Esophagus muscularis mucosa (tissue), 4 donors: ENCODE measurements at regions of chr11 and their contacts with region 1.

Region 1: GRCh38 chr11:17207317-17208258 is at the start of gene PIK3C2A:
- DNase-seq: peak; percentile 99
- H3K4me3 ChIP-seq: peak within 1 kb of the TSS; percentile 70 to 98 (median 90)
- H3K27ac ChIP-seq: peak within 1 kb of the TSS; percentile 94 to 98 (median 98)
- H3K4me1 ChIP-seq: peaks cover 18 to 40% (median 32%) of the 10 kb centered on the region in 4 donors
- H3K27me3 ChIP-seq: no peaks in the 10 kb centered on the region
- CTCF ChIP-seq: no peak
- EP300 ChIP-seq: no peak
- POLR2A ChIP-seq: peak; percentile 85
- total RNA-seq, gene PIK3C2A: 62.1 to 85.3 (median 72.7) TPM

Region 2: DNA sequence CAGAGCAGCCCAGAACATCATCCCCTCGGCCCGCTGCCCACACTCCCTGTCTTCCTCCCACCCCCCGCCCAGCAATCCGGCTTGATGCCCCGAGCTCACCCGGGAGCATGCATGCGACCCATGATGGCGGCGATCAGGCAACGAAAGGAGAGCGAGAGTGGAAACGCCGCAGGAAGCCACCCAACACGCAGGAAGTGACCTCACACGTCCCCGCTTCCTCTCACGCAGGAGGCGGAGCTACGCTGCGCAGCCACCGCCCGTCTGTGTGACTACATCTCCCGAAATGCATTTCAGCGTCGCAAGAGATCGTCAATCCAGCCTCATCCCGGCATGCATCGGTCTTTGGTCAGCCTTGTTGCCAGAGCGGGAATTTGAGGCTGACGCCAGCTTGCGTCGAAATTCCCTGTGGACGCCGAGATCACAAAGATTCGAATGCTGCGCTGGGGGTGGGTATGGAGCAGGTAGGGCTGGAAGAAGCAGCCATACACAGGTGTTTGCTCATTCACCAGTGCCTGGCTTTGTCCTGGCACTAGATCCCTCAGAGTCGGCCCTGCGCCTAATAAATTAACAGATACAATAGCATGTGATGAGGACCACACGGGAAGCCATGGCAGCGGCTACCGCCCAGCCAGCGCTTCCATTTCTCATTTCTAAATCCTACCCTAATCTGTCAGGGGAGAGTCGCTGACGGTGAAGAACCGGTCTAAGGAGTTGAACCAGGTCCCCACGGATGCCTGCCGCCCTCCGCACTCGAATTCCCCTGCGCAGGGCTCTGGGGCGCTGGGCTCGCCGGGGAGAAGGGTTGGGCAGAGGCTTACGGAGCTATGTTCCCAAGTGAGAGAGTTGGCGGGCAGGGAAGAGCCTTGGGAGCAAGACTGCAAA is 129.8 kb before region 1 on chr11 and contains the start of gene RPS13:
- intact Hi-C with region 1: loop called (anchors 5 kb)
- DNase-seq: peak; percentile 99
- H3K4me3 ChIP-seq: peak within 1 kb of the TSS; percentile 66 to 78 (median 74)
- H3K27ac ChIP-seq: peak within 1 kb of the TSS; percentile 89 to 93 (median 90)
- H3K4me1 ChIP-seq: peaks cover 29 to 37% (median 32%) of the 10 kb centered on the region in 4 donors
- H3K27me3 ChIP-seq: no peaks in the 10 kb centered on the region
- CTCF ChIP-seq: no peak
- EP300 ChIP-seq: no peak
- POLR2A ChIP-seq: peak; percentile 65
- total RNA-seq, gene RPS13: 828 to 2,253 (median 1,546) TPM

Region 3: DNA sequence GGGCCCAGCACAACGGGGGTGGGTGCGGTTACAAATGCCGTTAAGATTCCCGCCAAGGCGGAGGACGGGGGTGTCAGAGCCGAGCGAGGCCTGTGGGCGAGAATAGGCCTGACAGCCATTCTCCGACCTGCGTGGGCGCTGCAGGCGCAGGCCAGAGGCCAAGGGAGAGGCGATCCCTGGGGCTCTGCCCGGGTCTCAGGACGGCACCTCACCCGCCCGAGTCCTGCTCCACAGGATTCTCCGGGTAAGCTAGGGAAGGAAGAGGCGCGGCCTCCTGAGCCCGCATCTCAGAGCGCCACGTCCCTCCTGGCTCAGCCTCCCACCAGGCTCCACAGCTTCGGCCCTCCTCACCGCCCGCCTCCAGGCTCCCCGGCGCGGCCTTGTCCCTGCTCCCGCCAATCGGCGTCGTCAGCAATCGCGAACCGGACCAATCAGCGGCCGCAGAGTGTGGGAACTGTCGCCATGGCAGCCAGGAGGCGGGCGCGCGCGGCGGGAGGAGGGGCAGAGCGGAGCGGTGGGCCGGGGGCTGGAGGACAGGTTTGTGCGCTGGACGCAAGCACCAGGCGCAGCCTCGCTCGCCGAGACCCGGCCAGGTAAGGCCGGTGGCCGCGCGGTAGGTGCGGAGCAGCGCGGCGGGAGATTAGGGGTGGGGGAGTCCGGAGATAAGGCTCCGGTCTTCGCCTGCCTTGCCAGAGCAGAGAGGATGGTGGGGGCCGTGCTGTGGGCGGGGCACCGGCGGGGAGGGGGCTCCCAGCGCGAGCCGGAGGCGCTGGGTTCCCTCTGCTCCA is 68.8 kb after region 1 on chr11 and contains the start of gene NUCB2:
- intact Hi-C with region 1: loop called (anchors 5 kb)
- DNase-seq: peak; percentile 97
- H3K4me3 ChIP-seq: peak within 1 kb of the TSS; percentile 77 to 98 (median 94)
- H3K27ac ChIP-seq: peak within 1 kb of the TSS; percentile 86 to 95 (median 95)
- H3K4me1 ChIP-seq: peaks cover 8 to 20% (median 15%) of the 10 kb centered on the region in 4 donors
- H3K27me3 ChIP-seq: no peaks in the 10 kb centered on the region
- CTCF ChIP-seq: peak in 1 of 3 experiments; percentile 16
- EP300 ChIP-seq: no peak
- POLR2A ChIP-seq: no peak
- total RNA-seq, gene NUCB2: 34.3 to 43.8 (median 42.6) TPM

Region 4: DNA sequence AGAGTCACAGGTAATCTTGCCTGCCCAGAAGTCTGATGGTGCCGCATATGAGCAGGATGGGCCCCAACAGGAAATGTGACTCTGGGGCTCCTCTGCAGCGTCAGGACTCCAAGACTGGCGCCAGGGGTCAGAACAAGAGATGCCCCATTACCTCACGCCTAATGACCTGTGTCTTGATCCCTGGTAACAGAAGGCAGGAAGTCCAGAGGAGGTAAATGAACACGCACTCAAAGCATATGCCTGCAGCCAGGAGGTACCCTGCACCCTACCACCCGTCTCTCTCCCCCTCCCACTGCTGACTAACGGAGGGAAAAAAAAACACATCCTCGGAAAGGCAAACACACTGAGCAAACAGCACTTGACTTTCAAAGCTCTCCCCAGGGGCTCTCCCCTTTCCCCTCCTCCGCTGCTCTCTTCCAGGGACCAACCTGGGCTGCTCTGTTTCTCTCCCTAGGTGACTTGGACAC is 231.8 kb after region 1 on chr11:
- intact Hi-C with region 1: no loop called
- DNase-seq: no peak
- H3K4me3 ChIP-seq: no peak overlapping the region
- H3K27ac ChIP-seq: no peak overlapping the region
- H3K4me1 ChIP-seq: no peaks in the 10 kb centered on the region
- H3K27me3 ChIP-seq: peaks cover 0 to 34% (median 0%) of the 10 kb centered on the region in 4 donors
- CTCF ChIP-seq: no peak
- EP300 ChIP-seq: no peak
- POLR2A ChIP-seq: no peak